Panc1 (cell line): ENCODE measurements at regions of chr2 and their contacts with region 1.

Region 1: GRCh38 chr2:217562871-217563480 is 439.8 kb downstream of the TNS1 start:
- DNase-seq: no peak
- ATAC-seq: no peak
- H3K4me3 ChIP-seq: no peak overlapping the region
- H3K27ac ChIP-seq: no peak overlapping the region
- H3K4me1 ChIP-seq: no peaks in the 10 kb centered on the region
- H3K27me3 ChIP-seq: no peaks in the 10 kb centered on the region
- CTCF ChIP-seq: no peak

Region 2: DNA sequence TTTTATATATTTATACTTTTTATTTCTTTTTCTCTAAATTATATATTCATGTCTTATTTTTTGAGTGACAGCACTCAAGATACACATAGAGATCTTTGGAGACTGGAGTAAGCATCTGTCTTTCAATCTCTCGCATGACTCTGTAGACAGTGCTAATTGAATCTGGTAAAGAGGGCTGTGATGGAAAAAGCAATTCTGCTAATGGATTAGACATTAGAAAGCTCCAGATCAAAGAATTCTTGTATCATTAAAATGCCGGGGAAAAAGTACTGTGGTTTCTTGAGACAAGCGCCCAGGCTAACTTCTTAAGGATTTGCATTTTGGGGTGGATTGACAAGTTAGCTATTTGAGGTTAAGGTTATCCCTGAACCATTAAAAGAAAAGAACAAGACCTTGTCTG is 320.0 kb before region 1 on chr2:
- CTCF ChIA-PET with region 1: no interaction called
- POLR2A ChIA-PET with region 1: interaction called, 15 read pairs
- in situ Hi-C with region 1: no loop called
- intact Hi-C with region 1: no loop called
- DNase-seq: no peak
- ATAC-seq: no peak
- H3K4me3 ChIP-seq: no peak overlapping the region
- H3K27ac ChIP-seq: no peak overlapping the region
- H3K4me1 ChIP-seq: no peaks in the 10 kb centered on the region
- H3K27me3 ChIP-seq: no peaks in the 10 kb centered on the region
- CTCF ChIP-seq: no peak